Activated T-helper 1 cell treated with anti-CD3 and anti-CD28 coated beads, Interleukin-12 subunit alpha, Interleukin-12 subunit beta, Interleukin-2, Interleukin-4 antibody, amounts not matched to agents 30 ng/mL and 10 ng/mL and 1 ng/mL, durations not matched to agents 14 hours and 24 hours and 36 hours (primary cell): ENCODE measurements at regions of chr6 and their contacts with region 1.

Region 1: GRCh38 chr6:599576-600448 is 57.1 kb downstream of the HUS1B start:
- DNase-seq: no peak
- H3K4me3 Mint-ChIP-seq: no peak overlapping the region
- H3K27ac Mint-ChIP-seq: no peak overlapping the region
- H3K4me1 Mint-ChIP-seq: no peaks in the 10 kb centered on the region
- H3K27me3 Mint-ChIP-seq: no peaks in the 10 kb centered on the region

Region 2: DNA sequence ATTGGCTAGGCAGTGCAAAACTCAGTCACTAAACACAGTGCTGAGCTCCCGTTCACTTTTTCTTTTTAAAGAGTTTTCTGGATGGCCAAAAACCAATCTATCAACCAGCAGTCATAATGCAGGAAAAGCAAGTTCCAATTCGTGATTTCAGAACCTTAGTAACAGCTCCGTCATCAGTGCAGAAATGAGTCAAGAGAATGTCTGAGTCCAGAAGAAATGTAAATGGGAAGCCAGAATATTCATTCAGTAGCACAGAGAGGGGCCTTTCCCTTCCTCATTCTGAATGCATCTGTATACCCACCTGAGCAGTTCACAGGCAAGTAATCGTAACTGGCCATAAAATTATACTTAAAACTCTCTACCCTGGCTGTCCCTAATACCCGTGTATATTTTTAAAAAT is 36.7 kb after region 1 on chr6:
- intact Hi-C with region 1: loop called (anchors 1 kb)
- DNase-seq: no peak
- H3K4me3 Mint-ChIP-seq: no peak overlapping the region
- H3K27ac Mint-ChIP-seq: no peak overlapping the region
- H3K4me1 Mint-ChIP-seq: peaks cover 14% of the 10 kb centered on the region
- H3K27me3 Mint-ChIP-seq: no peaks in the 10 kb centered on the region

Region 3: GRCh38 chr6:939526-940252 is 339.9 kb after region 1 on chr6:
- intact Hi-C with region 1: no loop called
- DNase-seq: no peak
- H3K4me3 Mint-ChIP-seq: no peak overlapping the region
- H3K27ac Mint-ChIP-seq: no peak overlapping the region
- H3K4me1 Mint-ChIP-seq: no peaks in the 10 kb centered on the region
- H3K27me3 Mint-ChIP-seq: no peaks in the 10 kb centered on the region